Endothelial cell of umbilical vein (primary cell): ENCODE measurements at regions of chr18 and their contacts with region 1.

Region 1: DNA sequence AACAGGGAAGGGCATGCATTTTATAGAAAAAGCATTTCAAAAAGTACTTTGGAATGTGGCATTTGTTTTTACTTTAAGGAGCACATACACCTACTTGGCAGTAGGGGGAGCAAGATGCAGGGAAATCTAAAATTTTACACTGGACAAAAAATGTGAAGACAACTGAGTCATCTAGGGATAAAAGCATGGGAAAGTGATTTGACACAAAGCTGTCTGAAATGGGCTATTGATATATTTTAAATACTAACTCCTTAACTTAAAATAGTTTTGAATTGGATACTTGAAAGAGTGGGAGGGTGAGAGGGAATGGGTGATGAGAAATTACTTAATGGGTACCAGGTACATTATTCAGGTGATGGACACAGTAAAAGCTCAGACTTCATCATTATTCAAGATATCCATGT is 15.8 kb downstream of the TMEM200C start:
- DNase-seq: peak; percentile 36
- H3K4me3 ChIP-seq: no peak overlapping the region
- H3K27ac ChIP-seq: no peak overlapping the region
- H3K4me1 ChIP-seq: no peaks in the 10 kb centered on the region
- H3K27me3 ChIP-seq: no peaks in the 10 kb centered on the region
- CTCF ChIP-seq: peak; percentile 50 to 56
- POLR2A ChIP-seq: no peak

Region 2: DNA sequence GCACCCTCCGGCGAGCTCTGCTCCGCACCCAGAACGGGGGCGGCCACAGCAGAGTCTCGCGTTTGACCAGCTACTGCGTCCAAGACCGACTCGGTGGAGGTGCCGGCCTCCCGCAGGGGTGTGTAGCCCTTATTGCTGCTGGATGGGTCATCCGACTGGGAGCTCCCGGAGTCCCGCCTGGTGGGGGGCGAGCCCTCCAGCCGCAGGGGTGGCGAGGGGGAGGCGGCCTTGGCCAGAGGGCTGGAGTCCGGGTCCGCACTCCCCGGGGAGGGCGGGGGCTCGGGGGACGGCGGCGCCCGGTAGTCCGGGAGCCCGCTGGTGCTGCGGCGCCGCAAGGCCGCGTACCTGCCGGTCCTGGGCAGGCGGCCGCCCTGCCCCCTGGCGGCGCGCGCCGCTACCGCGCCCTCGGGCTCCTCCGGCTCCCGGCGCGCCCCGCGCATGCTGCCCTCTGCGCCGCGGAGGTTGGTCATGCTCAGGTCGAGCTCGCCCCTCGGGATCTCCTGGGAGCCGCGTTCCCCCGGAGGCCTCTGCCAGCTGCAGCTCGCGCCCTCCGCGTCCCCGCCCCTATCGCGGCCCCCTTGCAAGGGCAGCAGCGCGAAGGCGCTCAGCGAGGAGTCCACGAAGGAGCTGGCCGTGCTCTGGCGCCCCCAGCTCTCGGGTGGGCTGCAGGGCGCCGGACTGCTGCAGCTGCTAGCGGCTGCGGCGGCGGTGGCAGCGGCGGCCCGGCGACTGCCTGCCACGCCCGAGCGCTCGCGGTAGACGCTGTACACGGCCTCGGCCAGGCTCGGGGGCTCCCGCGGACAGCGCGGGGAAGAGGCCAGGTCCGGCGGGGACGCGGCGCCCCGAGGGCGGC is 11.1 kb after region 1 on chr18:
- CTCF ChIA-PET with region 1: interaction called, 38 read pairs
- POLR2A ChIA-PET with region 1: no interaction called
- dilution Hi-C with region 1: no loop called
- intact Hi-C with region 1: no loop called
- DNase-seq: peak; percentile 15
- H3K4me3 ChIP-seq: peak overlapping the region in 2 of 3 experiments; percentile 32 to 34
- H3K27ac ChIP-seq: no peak overlapping the region
- H3K4me1 ChIP-seq: peaks cover 3% of the 10 kb centered on the region
- H3K27me3 ChIP-seq: peaks cover 37 to 54% of the 10 kb centered on the region in 2 experiments
- CTCF ChIP-seq: peak; percentile 33 to 58
- POLR2A ChIP-seq: no peak

Region 3: GRCh38 chr18:6219116-6219717 is 339.7 kb after region 1 on chr18:
- CTCF ChIA-PET with region 1: interaction called, 60 read pairs
- POLR2A ChIA-PET with region 1: no interaction called
- dilution Hi-C with region 1: no loop called
- intact Hi-C with region 1: loop called (anchors 1 kb)
- DNase-seq: peak; percentile 52
- H3K4me3 ChIP-seq: no peak overlapping the region
- H3K27ac ChIP-seq: no peak overlapping the region
- H3K4me1 ChIP-seq: no peaks in the 10 kb centered on the region
- H3K27me3 ChIP-seq: no peaks in the 10 kb centered on the region
- CTCF ChIP-seq: peak; percentile 80 to 88
- POLR2A ChIP-seq: no peak

Region 4: GRCh38 chr18:6401687-6402086 is 522.2 kb after region 1 on chr18:
- CTCF ChIA-PET with region 1: no interaction called
- POLR2A ChIA-PET with region 1: no interaction called
- dilution Hi-C with region 1: no loop called
- intact Hi-C with region 1: loop called (anchors 1 kb)
- DNase-seq: no peak
- H3K4me3 ChIP-seq: no peak overlapping the region
- H3K27ac ChIP-seq: no peak overlapping the region
- H3K4me1 ChIP-seq: no peaks in the 10 kb centered on the region
- H3K27me3 ChIP-seq: no peaks in the 10 kb centered on the region
- CTCF ChIP-seq: no peak
- POLR2A ChIP-seq: no peak

Region 5: GRCh38 chr18:6482198-6482977 is 602.9 kb after region 1 on chr18:
- CTCF ChIA-PET with region 1: interaction called, 5 read pairs
- POLR2A ChIA-PET with region 1: no interaction called
- dilution Hi-C with region 1: no loop called
- intact Hi-C with region 1: loop called (anchors 1 kb)
- DNase-seq: no peak
- H3K4me3 ChIP-seq: no peak overlapping the region
- H3K27ac ChIP-seq: no peak overlapping the region
- H3K4me1 ChIP-seq: no peaks in the 10 kb centered on the region
- H3K27me3 ChIP-seq: no peaks in the 10 kb centered on the region
- CTCF ChIP-seq: peak; percentile 29 to 41
- POLR2A ChIP-seq: no peak

Region 6: GRCh38 chr18:6521795-6522418 is 642.4 kb after region 1 on chr18:
- CTCF ChIA-PET with region 1: interaction called, 65 read pairs
- POLR2A ChIA-PET with region 1: no interaction called
- dilution Hi-C with region 1: no loop called
- intact Hi-C with region 1: loop called (anchors 1 kb)
- DNase-seq: peak; percentile 52
- H3K4me3 ChIP-seq: no peak overlapping the region
- H3K27ac ChIP-seq: no peak overlapping the region
- H3K4me1 ChIP-seq: no peaks in the 10 kb centered on the region
- H3K27me3 ChIP-seq: no peaks in the 10 kb centered on the region
- CTCF ChIP-seq: peak; percentile 68 to 79
- POLR2A ChIP-seq: no peak